Heart left ventricle (tissue), 16 donors: ENCODE measurements at regions of chr3 and their contacts with region 1.

Region 1: DNA sequence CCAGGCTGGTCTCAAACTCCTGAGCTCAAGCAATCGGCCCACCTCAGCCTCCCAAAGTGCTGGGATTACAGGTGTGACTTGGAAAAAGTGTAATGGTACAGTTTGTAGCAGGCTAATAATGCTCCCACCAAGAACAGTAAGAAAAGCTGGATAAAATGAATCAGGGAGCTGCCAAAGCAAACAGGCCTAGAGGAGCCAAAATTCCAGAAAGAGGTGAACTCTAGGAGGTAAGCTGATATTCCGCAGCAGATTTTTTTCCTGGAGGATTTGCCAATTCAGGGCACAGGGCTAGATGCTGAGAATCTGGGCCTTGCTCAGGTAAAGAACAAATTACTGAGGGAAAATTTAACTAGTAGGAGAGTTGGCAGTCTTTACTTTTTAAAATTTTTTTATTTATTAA is 11.0 kb upstream of the PCYT1A start:
- DNase-seq: no peak
- ATAC-seq: no peak
- H3K4me3 ChIP-seq: no peak overlapping the region
- H3K27ac ChIP-seq: no peak overlapping the region
- H3K4me1 ChIP-seq: no peaks in the 10 kb centered on the region
- H3K27me3 ChIP-seq: no peaks in the 10 kb centered on the region
- CTCF ChIP-seq: no peak
- POLR2A ChIP-seq: no peak

Region 2: GRCh38 chr3:196317687-196318467 is 19.4 kb after region 1 on chr3 and contains the start of gene DYNLT2B:
- intact Hi-C with region 1: loop called in 1 of 10 experiments (anchors 2 kb)
- DNase-seq: peak; percentile 88 to 94 (median 91)
- ATAC-seq: peak; percentile 93 to 99 (median 98)
- H3K4me3 ChIP-seq: peak within 1 kb of the TSS; percentile 43 to 100 (median 78)
- H3K27ac ChIP-seq: peak within 1 kb of the TSS; percentile 66 to 99 (median 92)
- H3K4me1 ChIP-seq: peaks cover 0 to 6% (median 1%) of the 10 kb centered on the region in 12 donors
- H3K27me3 ChIP-seq: no peaks in the 10 kb centered on the region
- CTCF ChIP-seq: peak in 3 of 12 donors; percentile 11 to 22 (median 14)
- POLR2A ChIP-seq: peak; percentile 33 to 82
- total RNA-seq, gene DYNLT2B: 1.9 to 4.6 (median 3.6) TPM